Activated T-helper 1 cell treated with anti-CD3 and anti-CD28 coated beads, Interleukin-12 subunit alpha, Interleukin-12 subunit beta, Interleukin-2, Interleukin-4 antibody, amounts not matched to agents 30 ng/mL and 10 ng/mL and 1 ng/mL, durations not matched to agents 14 hours and 24 hours and 36 hours (primary cell): ENCODE measurements at regions of chr14 and their contacts with region 1.

Region 1: GRCh38 chr14:31106768-31107167 is 80.6 kb upstream of the STRN3 start:
- DNase-seq: no peak
- H3K4me3 Mint-ChIP-seq: no peak overlapping the region
- H3K27ac Mint-ChIP-seq: peak overlapping the region; percentile 29
- H3K4me1 Mint-ChIP-seq: no peaks in the 10 kb centered on the region
- H3K27me3 Mint-ChIP-seq: no peaks in the 10 kb centered on the region

Region 2: DNA sequence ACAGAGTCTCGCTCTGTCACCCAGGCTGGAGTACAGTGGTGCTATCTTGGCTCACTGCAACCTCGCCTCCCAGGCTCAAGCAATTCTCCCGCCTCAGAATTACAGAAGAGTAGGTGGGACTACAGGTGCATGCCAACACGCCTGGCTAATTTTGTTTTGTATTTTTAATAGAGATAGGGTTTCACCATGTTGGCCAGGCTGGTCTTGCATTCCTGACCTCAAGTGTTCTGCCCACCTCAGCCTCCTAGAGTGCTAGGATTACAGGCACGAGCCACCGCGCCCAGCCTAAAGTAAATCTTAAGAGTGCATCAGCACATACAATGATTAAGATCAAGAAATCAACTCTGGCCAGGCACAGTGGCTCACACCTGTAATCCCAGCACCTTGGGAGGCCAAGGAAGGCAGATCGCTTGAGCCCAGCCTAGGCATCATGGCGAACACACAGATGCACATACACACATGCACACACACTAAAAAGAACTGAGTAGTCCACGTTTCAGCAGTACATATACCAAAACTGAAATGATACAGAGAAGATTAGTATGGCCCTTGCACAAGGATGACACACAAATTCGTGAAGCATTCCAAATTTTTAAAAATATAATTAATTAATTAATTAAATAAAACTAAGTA is 35.8 kb after region 1 on chr14:
- intact Hi-C with region 1: loop called (anchors 2 kb)
- DNase-seq: no peak
- H3K4me3 Mint-ChIP-seq: no peak overlapping the region
- H3K27ac Mint-ChIP-seq: no peak overlapping the region
- H3K4me1 Mint-ChIP-seq: no peaks in the 10 kb centered on the region
- H3K27me3 Mint-ChIP-seq: no peaks in the 10 kb centered on the region